Heart left ventricle (tissue), 16 donors: ENCODE measurements at regions of chr22 and their contacts with region 1.

Region 1: GRCh38 chr22:35299673-35300497 is at the start of gene TOM1:
- DNase-seq: peak; percentile 97 to 99 (median 98)
- ATAC-seq: peak; percentile 95 to 98 (median 96)
- H3K4me3 ChIP-seq: peak within 1 kb of the TSS; percentile 63 to 97 (median 76)
- H3K27ac ChIP-seq: peak within 1 kb of the TSS; percentile 73 to 98 (median 92)
- H3K4me1 ChIP-seq: peaks cover 0 to 45% (median 24%) of the 10 kb centered on the region in 12 donors
- H3K27me3 ChIP-seq: no peaks in the 10 kb centered on the region
- CTCF ChIP-seq: no peak
- POLR2A ChIP-seq: peak; percentile 69 to 91
- total RNA-seq, gene TOM1: 46.8 to 362 (median 56.8) TPM

Region 2: GRCh38 chr22:35205961-35206360 is 93.9 kb before region 1 on chr22:
- intact Hi-C with region 1: no loop called
- DNase-seq: no peak
- ATAC-seq: peak in 1 of 4 donors; percentile 60
- H3K4me3 ChIP-seq: no peak overlapping the region
- H3K27ac ChIP-seq: no peak overlapping the region
- H3K4me1 ChIP-seq: peaks cover 0 to 8% (median 0%) of the 10 kb centered on the region in 12 donors
- H3K27me3 ChIP-seq: peaks cover 0 to 13% (median 0%) of the 10 kb centered on the region in 9 donors
- CTCF ChIP-seq: no peak
- POLR2A ChIP-seq: no peak

Region 3: DNA sequence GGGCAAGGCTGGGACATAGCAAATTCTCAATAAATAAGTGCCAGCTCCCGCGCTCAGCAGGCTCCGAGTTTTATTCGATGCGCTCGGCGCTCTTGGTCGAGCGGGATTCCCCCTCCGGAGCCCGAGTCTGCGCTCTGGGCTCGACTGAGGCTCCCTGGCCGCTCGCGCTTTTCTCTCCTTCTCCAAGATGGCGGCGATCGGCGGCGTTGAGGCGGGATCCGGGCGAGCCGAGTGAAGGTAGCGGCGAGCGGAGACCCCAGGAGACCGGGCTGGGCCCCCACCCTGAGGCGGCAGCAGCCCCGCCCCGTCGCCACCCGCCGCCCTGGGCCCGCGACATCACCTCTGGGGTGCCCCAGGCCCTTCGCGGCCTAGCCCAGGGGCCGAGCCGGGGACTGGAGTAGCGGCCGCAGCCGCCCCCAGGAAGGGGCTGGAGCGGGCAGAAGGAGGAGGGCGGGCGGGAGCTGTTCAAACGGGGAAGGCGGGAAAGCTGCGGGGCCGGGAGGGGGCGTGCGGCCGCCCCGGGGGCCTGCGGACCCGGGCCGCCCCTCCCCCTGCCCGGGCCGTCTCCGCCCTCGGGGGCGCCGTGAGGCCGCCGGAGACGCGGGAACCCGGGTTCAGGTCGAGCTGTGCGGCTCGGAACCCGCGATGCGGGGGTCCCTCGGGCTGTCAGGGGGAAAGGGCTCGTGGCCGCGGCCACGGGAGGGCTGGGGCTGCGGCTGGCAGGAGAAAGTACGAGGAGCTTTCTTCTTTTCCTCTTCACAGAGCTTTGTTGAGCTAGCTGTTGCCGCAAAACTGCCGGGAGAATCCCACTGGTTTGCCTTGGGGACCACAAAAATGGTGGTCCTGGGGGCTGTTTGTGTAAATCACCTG is 42.3 kb before region 1 on chr22 and contains the start of gene HMGXB4:
- intact Hi-C with region 1: loop called in 1 of 10 experiments (anchors 5 kb)
- DNase-seq: peak; percentile 87 to 93 (median 92)
- ATAC-seq: peak; percentile 92 to 98 (median 98)
- H3K4me3 ChIP-seq: peak within 1 kb of the TSS; percentile 62 to 96 (median 89)
- H3K27ac ChIP-seq: peak within 1 kb of the TSS; percentile 91 to 98 (median 96)
- H3K4me1 ChIP-seq: peaks cover 0 to 30% (median 12%) of the 10 kb centered on the region in 12 donors
- H3K27me3 ChIP-seq: no peaks in the 10 kb centered on the region
- CTCF ChIP-seq: peak in 6 of 12 donors; percentile 16 to 48 (median 28)
- POLR2A ChIP-seq: peak in 1 of 2 donors; percentile 29
- total RNA-seq, gene HMGXB4: 6.3 to 14.2 (median 9.7) TPM